ENCODE measurements at regions of chr12 and their contacts with region 1.

Region 1: GRCh38 chr12:116172224-116172849 is 105.2 kb downstream of the MED13L start:
- DNase-seq: peak; percentile 78
- H3K4me3 Mint-ChIP-seq: peak overlapping the region; percentile 58
- H3K27ac Mint-ChIP-seq: peak overlapping the region; percentile 92
- H3K4me1 Mint-ChIP-seq: peaks cover 67% of the 10 kb centered on the region
- H3K27me3 Mint-ChIP-seq: no peaks in the 10 kb centered on the region

Region 2: DNA sequence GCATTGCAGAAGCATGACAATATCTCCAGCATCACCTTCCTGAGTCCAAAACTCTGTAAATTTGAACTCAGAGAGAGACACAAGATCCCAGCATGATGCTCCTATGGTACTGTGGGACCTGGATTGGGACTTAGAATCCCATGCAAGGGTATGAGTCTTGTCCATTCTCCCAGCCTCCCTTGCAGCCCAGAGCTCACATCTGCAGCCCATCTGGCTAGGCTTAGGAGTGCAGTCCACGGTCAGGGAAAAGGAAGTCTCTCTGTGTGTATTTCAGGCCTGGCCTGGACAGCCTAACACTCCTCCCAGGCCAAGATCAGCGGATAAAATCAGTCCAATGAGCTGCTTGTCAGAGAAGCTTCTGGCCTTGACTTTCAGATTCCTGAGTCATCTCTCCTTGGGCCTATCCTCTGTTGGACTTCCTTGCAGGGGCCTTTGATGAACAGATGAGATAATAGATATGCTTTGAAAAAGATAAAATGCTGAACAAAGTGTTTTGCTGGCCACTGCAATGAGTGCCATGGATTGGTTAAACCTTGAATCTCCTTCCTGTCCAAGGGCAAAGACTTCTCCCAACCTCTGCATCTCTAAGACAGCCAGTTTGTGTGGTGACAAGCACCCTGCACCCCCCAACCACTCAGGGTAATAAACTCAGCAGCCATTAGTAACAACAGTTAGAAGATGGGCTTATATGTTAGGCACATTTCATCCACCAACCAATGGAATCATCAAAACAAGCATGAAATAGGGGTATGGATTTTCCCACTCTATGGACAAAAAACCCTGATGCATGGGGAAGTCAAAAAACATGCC is 1075.5 kb before region 1 on chr12:
- CTCF ChIA-PET with region 1: no interaction called
- intact Hi-C with region 1: no loop called
- DNase-seq: no peak
- H3K4me3 Mint-ChIP-seq: no peak overlapping the region
- H3K27ac Mint-ChIP-seq: no peak overlapping the region
- H3K4me1 Mint-ChIP-seq: no peaks in the 10 kb centered on the region
- H3K27me3 Mint-ChIP-seq: peaks cover 2% of the 10 kb centered on the region

Region 3: GRCh38 chr12:116087962-116088361 is 84.4 kb before region 1 on chr12:
- CTCF ChIA-PET with region 1: interaction called, 4 read pairs
- intact Hi-C with region 1: loop called (anchors 1 kb)
- DNase-seq: no peak
- H3K4me3 Mint-ChIP-seq: no peak overlapping the region
- H3K27ac Mint-ChIP-seq: no peak overlapping the region
- H3K4me1 Mint-ChIP-seq: peaks cover 46% of the 10 kb centered on the region
- H3K27me3 Mint-ChIP-seq: no peaks in the 10 kb centered on the region

Region 4: GRCh38 chr12:116182359-116183063 is 10.2 kb after region 1 on chr12:
- CTCF ChIA-PET with region 1: interaction called, 5 read pairs
- intact Hi-C with region 1: loop called (anchors 1 kb)
- DNase-seq: no peak
- H3K4me3 Mint-ChIP-seq: no peak overlapping the region
- H3K27ac Mint-ChIP-seq: no peak overlapping the region
- H3K4me1 Mint-ChIP-seq: peaks cover 51% of the 10 kb centered on the region
- H3K27me3 Mint-ChIP-seq: no peaks in the 10 kb centered on the region

Region 5: GRCh38 chr12:116266168-116266601 is 93.8 kb after region 1 on chr12:
- CTCF ChIA-PET with region 1: no interaction called
- intact Hi-C with region 1: no loop called
- DNase-seq: no peak
- H3K4me3 Mint-ChIP-seq: no peak overlapping the region
- H3K27ac Mint-ChIP-seq: no peak overlapping the region
- H3K4me1 Mint-ChIP-seq: peaks cover 44% of the 10 kb centered on the region
- H3K27me3 Mint-ChIP-seq: no peaks in the 10 kb centered on the region

Region 6: GRCh38 chr12:116303929-116304328 is 131.6 kb after region 1 on chr12:
- CTCF ChIA-PET with region 1: no interaction called
- intact Hi-C with region 1: no loop called
- DNase-seq: no peak
- H3K4me3 Mint-ChIP-seq: no peak overlapping the region
- H3K27ac Mint-ChIP-seq: no peak overlapping the region
- H3K4me1 Mint-ChIP-seq: no peaks in the 10 kb centered on the region
- H3K27me3 Mint-ChIP-seq: no peaks in the 10 kb centered on the region

Region 7: GRCh38 chr12:116803013-116803736 is 630.8 kb after region 1 on chr12:
- CTCF ChIA-PET with region 1: no interaction called
- intact Hi-C with region 1: no loop called
- DNase-seq: no peak
- H3K4me3 Mint-ChIP-seq: no peak overlapping the region
- H3K27ac Mint-ChIP-seq: no peak overlapping the region
- H3K4me1 Mint-ChIP-seq: no peaks in the 10 kb centered on the region
- H3K27me3 Mint-ChIP-seq: no peaks in the 10 kb centered on the region